T-cell (primary cell): ENCODE measurements at regions of chr19 and their contacts with region 1.

Region 1: DNA sequence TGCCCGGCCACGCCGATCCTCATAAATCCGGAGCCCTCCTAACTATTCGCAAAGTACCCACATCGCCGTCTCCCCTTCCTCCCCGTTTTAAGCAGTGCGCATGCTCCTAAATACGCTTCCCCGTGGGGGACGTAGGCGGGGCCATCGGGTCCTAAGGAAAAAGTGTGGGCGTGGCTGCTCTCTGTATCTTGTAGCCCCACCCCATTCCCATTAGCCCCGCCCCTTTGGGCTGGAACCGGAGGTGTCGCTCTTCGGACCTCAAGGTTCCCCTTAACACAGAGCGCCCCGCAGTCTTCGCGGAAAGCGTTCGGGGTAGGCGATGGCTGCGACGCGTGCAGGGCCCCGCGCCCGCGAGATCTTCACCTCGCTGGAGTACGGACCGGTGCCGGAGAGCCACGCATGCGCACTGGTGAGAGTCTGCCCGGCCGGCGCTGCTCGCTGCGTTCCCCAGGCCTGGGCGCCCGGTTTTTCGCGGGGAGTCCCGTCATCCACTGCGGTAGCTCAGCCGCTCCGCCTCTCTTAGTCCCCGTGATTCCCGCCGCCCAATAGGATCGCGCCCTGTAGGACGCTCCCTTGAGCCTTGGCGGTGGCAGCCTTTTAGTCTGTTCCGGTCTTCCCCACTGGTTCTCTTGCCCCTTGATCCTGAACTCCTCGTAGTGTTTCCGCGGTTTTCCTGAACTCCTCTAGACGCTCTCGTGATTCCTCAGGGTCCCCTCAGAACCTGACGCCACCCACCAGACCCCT is at the start of gene ALDH16A1:
- DNase-seq: peak; percentile 95 to 98 (median 97)
- ATAC-seq: peak; percentile 86 to 92 (median 88)
- H3K4me3 ChIP-seq: peak within 1 kb of the TSS; percentile 99
- H3K4me3 Mint-ChIP-seq: peak within 1 kb of the TSS; percentile 95 to 98 (median 98)
- H3K27ac ChIP-seq: peak within 1 kb of the TSS; percentile 83
- H3K27ac Mint-ChIP-seq: peak within 1 kb of the TSS; percentile 98 to 99
- H3K4me1 ChIP-seq: peaks cover 7 to 64% of the 10 kb centered on the region in 2 experiments
- H3K4me1 Mint-ChIP-seq: peaks cover 52 to 68% (median 56%) of the 10 kb centered on the region in 3 donors
- H3K27me3 ChIP-seq: no peaks in the 10 kb centered on the region
- H3K27me3 Mint-ChIP-seq: no peaks in the 10 kb centered on the region
- total RNA-seq, gene ALDH16A1: 32.8 to 57.2 (median 46.3) TPM

Region 2: DNA sequence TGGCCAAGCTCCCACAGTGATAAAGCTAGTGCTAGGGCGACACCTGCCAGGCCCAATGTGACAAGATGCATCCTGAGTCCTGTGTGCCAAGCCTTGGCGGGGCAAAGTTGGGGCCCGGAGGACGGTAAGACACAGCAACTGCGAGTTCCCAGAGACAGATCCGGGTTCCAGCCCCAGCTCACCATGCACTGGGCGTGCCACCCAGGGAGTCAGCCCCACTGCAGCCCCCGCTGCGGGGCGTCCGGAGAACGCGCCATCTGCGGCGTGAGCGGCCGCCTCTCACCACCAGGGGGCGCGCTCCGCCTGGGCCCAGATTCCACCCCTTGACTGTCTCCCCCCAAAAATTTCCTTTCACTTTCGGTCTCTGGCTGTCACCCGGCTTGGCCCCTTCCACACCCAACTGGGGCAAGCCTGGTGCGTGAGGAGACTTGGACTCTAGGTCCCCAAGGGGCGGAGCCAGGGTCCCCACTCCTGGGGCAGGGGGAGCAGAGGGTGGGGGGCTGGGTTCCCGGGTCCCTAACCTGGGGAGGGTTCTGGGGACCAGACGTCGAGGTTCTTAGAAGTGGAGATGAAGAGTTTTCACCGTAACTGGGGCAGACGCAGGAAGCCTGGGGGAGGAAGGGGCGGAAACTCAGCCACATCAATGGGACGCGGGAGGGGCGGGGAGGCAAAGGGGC is 20.8 kb after region 1 on chr19 and contains the start of gene FLT3LG:
- CTCF ChIA-PET with region 1: interaction called, 4 to 12 read pairs
- POLR2A ChIA-PET with region 1: interaction called, 7 to 11 read pairs
- DNase-seq: peak; percentile 83 to 96 (median 89)
- ATAC-seq: peak; percentile 67 to 76 (median 69)
- H3K4me3 ChIP-seq: peak within 1 kb of the TSS; percentile 90 to 94
- H3K4me3 Mint-ChIP-seq: peak within 1 kb of the TSS; percentile 89 to 96 (median 94)
- H3K27ac ChIP-seq: peak within 1 kb of the TSS; percentile 93
- H3K27ac Mint-ChIP-seq: peak within 1 kb of the TSS; percentile 93 to 97
- H3K4me1 ChIP-seq: peaks cover 36 to 83% of the 10 kb centered on the region in 2 experiments
- H3K4me1 Mint-ChIP-seq: peaks cover 54 to 67% (median 59%) of the 10 kb centered on the region in 3 donors
- H3K27me3 ChIP-seq: no peaks in the 10 kb centered on the region
- H3K27me3 Mint-ChIP-seq: no peaks in the 10 kb centered on the region
- total RNA-seq, gene FLT3LG: 238 to 356 (median 260) TPM